ENCODE measurements at regions of chr11 and their contacts with region 1.

Region 1: DNA sequence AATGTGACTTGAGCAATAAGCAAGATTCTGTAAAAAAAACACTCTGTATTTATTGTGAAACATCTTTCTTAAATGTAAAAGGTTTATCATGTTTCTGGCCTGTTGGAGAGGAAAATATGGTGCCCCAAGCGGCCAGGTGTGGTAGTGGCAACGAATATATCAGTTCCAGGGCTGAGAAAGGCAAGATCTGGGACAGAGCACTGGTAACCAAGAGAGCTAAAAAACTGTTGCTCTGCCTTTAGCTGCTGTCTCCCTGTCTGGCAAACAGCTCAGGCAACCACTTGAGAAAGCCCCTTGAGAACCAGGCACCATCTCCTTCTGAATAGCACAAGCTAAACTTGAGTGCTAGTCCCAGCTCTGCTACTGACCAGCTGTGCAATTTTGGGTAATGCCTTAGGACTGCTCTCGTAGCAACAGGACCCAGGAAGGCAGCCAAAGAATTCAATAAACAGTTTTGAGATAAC is 129.9 kb downstream of the KCNC1 start:
- DNase-seq: no peak
- CTCF ChIP-seq: peak; percentile 59

Region 2: DNA sequence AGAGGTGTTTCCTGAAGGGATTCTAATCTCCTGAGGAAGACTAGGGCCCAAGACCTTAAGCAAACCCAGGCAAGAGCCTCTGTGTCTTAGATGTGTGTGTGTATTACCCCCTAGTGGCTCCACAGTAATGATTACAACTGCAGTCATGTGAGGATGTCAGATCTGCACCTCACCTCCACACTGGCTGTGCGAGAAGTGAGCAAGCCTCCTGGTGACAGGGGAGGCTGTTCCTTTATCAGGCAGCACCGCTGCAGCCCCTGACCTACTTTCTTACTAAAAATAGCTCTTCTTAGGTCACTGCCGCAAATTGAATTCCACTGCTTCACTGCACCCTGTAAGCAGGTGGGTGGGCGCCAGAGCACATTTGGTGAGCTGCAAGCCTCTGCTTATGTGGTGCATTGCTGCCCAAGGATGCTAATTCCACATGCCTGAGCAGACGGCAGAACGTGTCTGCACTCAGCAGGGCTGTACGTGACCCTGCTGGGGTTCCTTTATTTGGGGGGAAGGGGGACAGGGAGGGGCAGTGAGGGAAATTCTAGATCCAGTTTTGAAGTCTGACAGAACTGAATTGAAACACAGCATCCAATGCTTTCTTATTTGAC is 17.6 kb before region 1 on chr11:
- CTCF ChIA-PET with region 1: interaction called, 43 read pairs
- POLR2A ChIA-PET with region 1: no interaction called
- DNase-seq: no peak
- CTCF ChIP-seq: no peak

Region 3: DNA sequence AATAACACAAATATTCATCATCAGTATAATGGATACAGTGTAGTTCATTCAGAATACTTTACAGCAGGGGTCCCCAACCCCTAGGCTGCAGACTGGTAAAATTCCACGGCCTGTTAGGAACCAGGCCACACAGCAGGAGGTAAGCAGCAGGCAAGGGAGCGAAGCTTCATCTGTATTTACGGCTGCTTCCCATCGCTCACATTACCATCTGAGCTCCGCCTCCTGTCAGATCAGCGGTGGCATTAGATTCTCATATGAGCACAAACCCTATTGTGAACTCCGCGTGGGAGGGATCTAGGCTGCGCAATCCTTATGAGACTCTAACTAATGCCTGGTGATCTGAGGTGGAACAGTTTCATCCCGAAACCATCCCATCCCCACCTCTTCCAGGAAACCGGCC is 23.3 kb after region 1 on chr11:
- CTCF ChIA-PET with region 1: interaction called, 13 read pairs
- POLR2A ChIA-PET with region 1: no interaction called
- DNase-seq: no peak
- CTCF ChIP-seq: no peak

Measured in GM10248 (cell line).